Spleen (tissue), 13 donors: ENCODE measurements at regions of chr19 and their contacts with region 1.

Region 1: DNA sequence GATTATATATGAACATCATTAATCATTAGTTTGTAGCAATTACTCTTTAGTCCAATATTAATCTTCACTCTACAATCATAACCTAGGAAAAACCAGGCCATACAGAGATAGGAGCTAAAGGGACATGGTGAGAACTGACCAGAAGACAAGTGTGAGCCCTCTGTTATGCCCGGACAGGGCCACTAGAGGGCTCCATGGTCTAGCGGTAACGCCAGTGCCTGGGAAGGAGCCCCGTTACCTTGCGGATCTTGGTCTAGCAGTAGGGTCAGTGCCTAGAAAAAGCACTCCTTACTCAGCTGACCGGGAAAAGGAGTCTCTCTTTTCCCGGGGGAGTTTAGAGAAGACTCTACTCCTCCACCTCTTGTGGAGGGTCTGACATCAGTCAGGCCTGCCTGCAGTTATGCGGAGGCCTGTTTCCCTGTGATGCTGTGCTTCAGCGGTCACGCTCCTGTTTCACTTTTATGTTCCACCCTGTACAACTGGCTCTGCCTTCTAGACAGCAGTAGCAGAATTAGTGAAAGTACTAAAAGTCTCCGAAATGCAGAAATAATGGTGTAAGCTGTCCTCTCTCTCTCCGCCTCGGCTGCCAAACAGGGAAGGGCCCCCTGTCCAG is 13.8 kb downstream of the OR7D4 start:
- DNase-seq: peak; percentile 88
- H3K4me3 ChIP-seq: peak overlapping the region in 5 of 8 donors; percentile 19 to 57 (median 25)
- H3K27ac ChIP-seq: no peak overlapping the region
- H3K4me1 ChIP-seq: peaks cover 0 to 7% (median 6%) of the 10 kb centered on the region in 6 donors
- H3K27me3 ChIP-seq: peaks cover 0 to 8% (median 0%) of the 10 kb centered on the region in 7 donors
- CTCF ChIP-seq: peak; percentile 66 to 93 (median 86)
- POLR2A ChIP-seq: no peak

Region 2: GRCh38 chr19:9140159-9140874 is 65.3 kb before region 1 on chr19 and contains the start of gene ZNF317:
- intact Hi-C with region 1: loop called (anchors 10 kb)
- DNase-seq: peak; percentile 95
- H3K4me3 ChIP-seq: peak within 1 kb of the TSS; percentile 90 to 96 (median 93)
- H3K27ac ChIP-seq: peak within 1 kb of the TSS; percentile 81 to 93 (median 90)
- H3K4me1 ChIP-seq: peaks cover 17 to 52% (median 34%) of the 10 kb centered on the region in 6 donors
- H3K27me3 ChIP-seq: no peaks in the 10 kb centered on the region
- CTCF ChIP-seq: peak in 2 of 11 experiments; percentile 26 to 28
- POLR2A ChIP-seq: peak in 1 of 3 donors; percentile 28
- total RNA-seq, gene ZNF317: 33.5 to 43.8 (median 35.6) TPM